B cell (primary cell): ENCODE measurements at regions of chr15 and their contacts with region 1.

Region 1: DNA sequence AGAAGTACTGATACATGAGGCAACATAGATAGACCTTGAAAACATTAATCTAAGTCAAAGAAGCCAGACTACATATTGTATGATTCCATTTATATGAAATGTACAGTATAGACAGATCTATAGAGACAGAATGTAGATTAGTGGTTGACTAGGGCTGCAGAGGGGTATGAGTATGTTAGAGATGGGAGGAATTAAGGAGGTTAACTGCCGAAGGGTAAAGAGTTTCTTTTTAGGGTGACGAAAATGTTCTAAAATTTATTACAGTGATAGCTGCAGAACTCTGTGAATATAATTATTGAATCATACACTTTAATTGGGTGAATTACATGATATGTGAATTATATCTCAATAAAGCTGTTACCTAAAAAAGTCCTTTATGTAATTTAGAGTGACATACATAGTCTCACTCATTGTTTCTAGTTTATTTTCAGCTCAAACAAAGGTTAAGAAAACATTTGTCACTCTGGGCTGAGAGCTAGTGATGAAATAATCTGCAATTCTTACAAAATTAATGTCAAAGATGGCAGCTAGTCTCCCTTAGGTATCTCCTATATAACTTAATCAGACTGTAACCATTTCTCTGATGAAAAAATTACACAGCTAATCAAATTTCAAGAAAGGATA is 61.4 kb downstream of the DENND4A start:
- DNase-seq: no peak
- ATAC-seq: no peak
- H3K4me3 ChIP-seq: no peak overlapping the region
- H3K4me3 Mint-ChIP-seq: no peak overlapping the region
- H3K27ac ChIP-seq: no peak overlapping the region
- H3K27ac Mint-ChIP-seq: no peak overlapping the region
- H3K4me1 ChIP-seq: no peaks in the 10 kb centered on the region
- H3K4me1 Mint-ChIP-seq: peaks cover 1% of the 10 kb centered on the region
- H3K27me3 ChIP-seq: no peaks in the 10 kb centered on the region
- H3K27me3 Mint-ChIP-seq: no peaks in the 10 kb centered on the region
- CTCF ChIP-seq: no peak

Region 2: GRCh38 chr15:65666257-65666656 is 64.4 kb before region 1 on chr15:
- CTCF ChIA-PET with region 1: no interaction called
- POLR2A ChIA-PET with region 1: no interaction called
- intact Hi-C with region 1: loop called (anchors 10 kb)
- DNase-seq: no peak
- ATAC-seq: no peak
- H3K4me3 ChIP-seq: no peak overlapping the region
- H3K4me3 Mint-ChIP-seq: no peak overlapping the region
- H3K27ac ChIP-seq: no peak overlapping the region
- H3K27ac Mint-ChIP-seq: peak overlapping the region; percentile 46
- H3K4me1 ChIP-seq: peaks cover 3 to 7% of the 10 kb centered on the region in 2 donors
- H3K4me1 Mint-ChIP-seq: peaks cover 21% of the 10 kb centered on the region
- H3K27me3 ChIP-seq: no peaks in the 10 kb centered on the region
- H3K27me3 Mint-ChIP-seq: no peaks in the 10 kb centered on the region
- CTCF ChIP-seq: no peak